OCI-LY7 (cell line): ENCODE measurements at regions of chr12 and their contacts with region 1.

Region 1: GRCh38 chr12:59808317-59808910 is 212.6 kb downstream of the SLC16A7 start:
- DNase-seq: peak; percentile 47
- H3K4me3 ChIP-seq: no peak overlapping the region
- H3K27ac ChIP-seq: no peak overlapping the region
- H3K4me1 ChIP-seq: no peaks in the 10 kb centered on the region
- CTCF ChIP-seq: peak; percentile 88

Region 2: DNA sequence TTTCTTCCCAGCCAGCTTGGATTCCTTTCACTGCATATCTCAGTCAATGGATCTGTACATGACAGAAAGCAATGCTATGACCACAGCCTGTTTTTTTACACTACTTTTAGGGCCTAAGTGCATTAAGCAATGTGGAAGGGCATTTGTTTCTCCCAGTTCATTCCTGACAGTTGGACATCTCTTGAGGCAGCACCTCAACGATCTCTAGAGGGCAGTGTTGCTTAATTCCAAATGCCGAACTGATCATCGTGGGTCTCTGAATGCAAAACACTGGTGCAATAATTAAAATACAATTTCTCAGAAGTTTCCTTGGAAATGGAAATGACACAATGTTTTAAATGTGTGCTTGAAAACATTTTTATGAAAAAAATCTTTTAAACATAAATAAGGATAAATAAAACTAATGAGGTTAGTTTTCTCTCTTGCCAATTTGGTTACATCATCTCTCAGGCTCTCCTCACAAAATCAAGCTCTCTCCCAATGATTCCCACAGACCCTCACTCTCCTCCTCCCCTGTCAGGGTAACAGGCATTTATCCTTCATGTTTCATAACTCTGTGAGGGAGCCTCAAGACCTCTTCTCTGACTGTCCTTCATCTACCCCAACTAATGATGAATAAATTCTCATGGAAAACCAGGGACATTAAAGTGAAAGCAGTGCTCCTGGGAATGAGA is 405.0 kb before region 1 on chr12:
- CTCF ChIA-PET with region 1: no interaction called
- POLR2A ChIA-PET with region 1: interaction called, 3 read pairs
- intact Hi-C with region 1: loop called (anchors 5 kb)
- DNase-seq: peak; percentile 63
- H3K4me3 ChIP-seq: no peak overlapping the region
- H3K27ac ChIP-seq: no peak overlapping the region
- H3K4me1 ChIP-seq: no peaks in the 10 kb centered on the region
- CTCF ChIP-seq: peak; percentile 90

Region 3: GRCh38 chr12:59580050-59580449 is 228.4 kb before region 1 on chr12:
- CTCF ChIA-PET with region 1: no interaction called
- POLR2A ChIA-PET with region 1: no interaction called
- intact Hi-C with region 1: loop called (anchors 5 kb)
- DNase-seq: no peak
- H3K4me3 ChIP-seq: no peak overlapping the region
- H3K27ac ChIP-seq: no peak overlapping the region
- H3K4me1 ChIP-seq: no peaks in the 10 kb centered on the region
- CTCF ChIP-seq: no peak

Region 4: GRCh38 chr12:59595883-59596540 is 212.4 kb before region 1 on chr12 and contains the start of gene SLC16A7:
- CTCF ChIA-PET with region 1: no interaction called
- POLR2A ChIA-PET with region 1: no interaction called
- intact Hi-C with region 1: loop called (anchors 5 kb)
- DNase-seq: peak; percentile 92
- H3K4me3 ChIP-seq: peak within 1 kb of the TSS; percentile 80
- H3K27ac ChIP-seq: peak within 1 kb of the TSS; percentile 88
- H3K4me1 ChIP-seq: peaks cover 23% of the 10 kb centered on the region
- CTCF ChIP-seq: peak; percentile 41; the same call in 1 of the 2 replicates
- total RNA-seq, gene SLC16A7: 26.9 and 34.1 TPM in 2 replicates